Naive thymus-derived CD8-positive, alpha-beta T cell (primary cell): ENCODE measurements at regions of chr7 and their contacts with region 1.

Region 1: DNA sequence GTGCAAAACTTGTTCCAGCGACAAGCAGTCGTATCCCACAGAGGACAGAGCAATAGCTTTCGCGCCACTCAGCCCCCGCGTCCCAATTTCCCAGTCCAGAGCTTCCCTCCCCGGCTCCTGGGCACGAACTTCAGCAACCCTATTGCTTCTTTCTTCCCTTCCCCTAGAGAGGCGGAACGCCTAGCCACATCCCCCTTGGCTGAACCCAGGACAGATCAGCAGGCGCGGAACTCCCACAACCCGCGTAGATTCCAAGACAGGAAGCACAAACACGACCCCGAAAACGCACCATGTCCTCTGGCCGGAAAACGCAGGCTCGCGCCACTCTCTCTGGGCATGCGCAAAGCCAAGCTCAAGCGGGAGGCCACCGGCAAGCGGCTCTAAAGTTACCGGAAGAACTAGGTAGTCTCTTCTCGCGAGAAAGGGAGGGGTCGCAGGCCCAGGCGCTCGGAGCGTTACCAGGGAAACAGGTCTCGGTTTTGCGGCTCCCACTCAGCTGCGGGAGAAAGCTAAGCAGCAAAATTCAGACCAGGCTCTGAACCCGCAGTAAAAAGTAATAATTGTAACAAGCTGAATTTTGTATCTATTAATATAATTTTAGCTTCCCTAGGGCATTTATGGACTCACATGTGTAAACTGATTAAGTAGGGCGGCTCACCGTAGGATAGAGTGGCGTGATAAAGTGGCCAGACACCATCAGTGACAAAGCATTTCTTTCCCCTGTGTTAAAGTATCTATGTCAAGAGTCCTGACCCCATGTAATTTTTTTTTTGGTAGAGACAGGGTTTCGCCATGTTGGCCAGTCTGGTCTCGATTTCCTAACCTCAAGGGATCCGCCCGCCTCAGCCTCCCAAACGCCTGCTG is at the start of gene TMEM209:
- DNase-seq: peak; percentile 83 to 98 (median 94)
- ATAC-seq: peak; percentile 93 to 96
- H3K4me3 Mint-ChIP-seq: peak within 1 kb of the TSS; percentile 92 to 100 (median 98)
- H3K27ac Mint-ChIP-seq: peak within 1 kb of the TSS; percentile 96 to 100 (median 99)
- H3K4me1 Mint-ChIP-seq: peaks cover 13 to 36% (median 26%) of the 10 kb centered on the region in 4 donors
- H3K27me3 Mint-ChIP-seq: peaks cover 0 to 2% (median 0%) of the 10 kb centered on the region in 5 donors
- polyA plus RNA-seq, gene TMEM209: 40.8 to 44.3 (median 43.2) TPM

Region 2: GRCh38 chr7:130069978-130070860 is 135.1 kb before region 1 on chr7 and contains the start of gene KLHDC10:
- POLR2A ChIA-PET with region 1: interaction called, 15 read pairs
- DNase-seq: peak; percentile 83 to 99 (median 97)
- ATAC-seq: peak; percentile 93 to 95
- H3K4me3 Mint-ChIP-seq: peak within 1 kb of the TSS; percentile 86 to 99 (median 93)
- H3K27ac Mint-ChIP-seq: peak within 1 kb of the TSS; percentile 84 to 97 (median 96)
- H3K4me1 Mint-ChIP-seq: peaks cover 28 to 51% (median 47%) of the 10 kb centered on the region in 4 donors
- H3K27me3 Mint-ChIP-seq: peaks cover 0 to 2% (median 0%) of the 10 kb centered on the region in 5 donors
- polyA plus RNA-seq, gene KLHDC10: 1.9 to 2.4 (median 2.3) TPM

Region 3: GRCh38 chr7:130084037-130084875 is 121.1 kb before region 1 on chr7:
- POLR2A ChIA-PET with region 1: no interaction called
- DNase-seq: peak in 1 of 10 donors; percentile 8
- ATAC-seq: peak in 1 of 2 donors; percentile 39
- H3K4me3 Mint-ChIP-seq: no peak overlapping the region
- H3K27ac Mint-ChIP-seq: peak overlapping the region in 2 of 10 donors; percentile 53 to 66
- H3K4me1 Mint-ChIP-seq: peaks cover 13 to 45% (median 33%) of the 10 kb centered on the region in 4 donors
- H3K27me3 Mint-ChIP-seq: no peaks in the 10 kb centered on the region

Region 4: GRCh38 chr7:130141161-130141883 is 64.0 kb before region 1 on chr7:
- POLR2A ChIA-PET with region 1: interaction called, 20 read pairs
- DNase-seq: peak in 9 of 10 donors; percentile 25 to 71 (median 48)
- ATAC-seq: peak; percentile 80 to 82
- H3K4me3 Mint-ChIP-seq: peak overlapping the region; percentile 78 to 88 (median 82)
- H3K27ac Mint-ChIP-seq: peak overlapping the region; percentile 15 to 91 (median 75)
- H3K4me1 Mint-ChIP-seq: peaks cover 5 to 35% (median 17%) of the 10 kb centered on the region in 4 donors
- H3K27me3 Mint-ChIP-seq: no peaks in the 10 kb centered on the region

Region 5: DNA sequence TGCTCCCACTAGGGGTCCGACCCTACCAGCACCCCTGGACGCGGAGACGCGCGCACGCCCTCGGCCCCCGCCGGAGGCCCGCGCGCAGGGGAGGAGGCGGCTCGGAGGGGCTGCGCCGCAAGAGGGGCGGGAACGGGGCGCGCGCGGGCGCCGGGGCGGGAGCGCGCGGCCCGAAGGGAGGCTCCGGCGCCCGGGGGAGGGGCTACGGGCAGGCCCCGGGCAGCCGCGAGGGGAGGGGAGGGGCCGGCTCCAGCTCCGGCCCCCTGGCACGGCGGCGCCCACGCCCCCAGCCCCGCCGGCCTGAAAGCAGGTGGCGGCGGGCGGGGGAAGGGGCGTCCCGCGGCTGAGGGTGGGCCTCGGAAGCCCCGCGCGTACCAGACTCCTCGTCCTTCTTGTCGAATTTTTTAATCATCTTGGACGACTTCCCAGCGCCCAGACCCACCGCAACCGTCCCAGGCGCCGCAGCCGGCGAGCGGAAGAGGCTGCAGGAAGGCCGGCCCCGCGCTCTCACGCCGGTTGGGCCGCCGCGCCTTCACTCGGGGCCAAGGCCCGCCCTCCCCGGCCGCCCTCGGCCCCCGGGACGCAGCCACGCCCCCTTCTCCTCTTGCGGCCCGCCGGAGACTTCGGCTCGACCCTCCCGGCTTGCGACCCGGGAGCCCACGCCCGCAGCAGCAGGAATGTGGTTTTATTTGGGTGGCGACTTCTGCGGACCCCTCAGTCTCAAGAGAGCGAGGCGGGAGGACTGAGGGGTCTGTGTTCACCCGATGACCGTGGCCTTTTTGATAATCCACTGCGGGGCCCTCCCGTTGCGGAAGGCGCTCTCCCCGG is 463.2 kb after region 1 on chr7 and contains the start of gene COPG2:
- POLR2A ChIA-PET with region 1: interaction called, 10 read pairs
- DNase-seq: peak; percentile 35 to 75 (median 66)
- ATAC-seq: peak; percentile 79 to 89
- H3K4me3 Mint-ChIP-seq: peak within 1 kb of the TSS; percentile 81 to 95 (median 91)
- H3K27ac Mint-ChIP-seq: peak within 1 kb of the TSS; percentile 28 to 91 (median 86)
- H3K4me1 Mint-ChIP-seq: peaks cover 6 to 21% (median 18%) of the 10 kb centered on the region in 4 donors
- H3K27me3 Mint-ChIP-seq: peaks cover 0 to 5% (median 0%) of the 10 kb centered on the region in 5 donors
- polyA plus RNA-seq, gene COPG2: 1.9 to 6.5 (median 3.0) TPM